ENCODE measurements at regions of chr4 and their contacts with region 1.

Region 1: GRCh38 chr4:185183619-185184281 is 20.1 kb downstream of the CFAP97 start:
- DNase-seq: peak; percentile 82
- H3K4me3 ChIP-seq: no peak overlapping the region
- H3K27ac ChIP-seq: no peak overlapping the region
- H3K4me1 ChIP-seq: no peaks in the 10 kb centered on the region
- H3K27me3 ChIP-seq: no peaks in the 10 kb centered on the region
- CTCF ChIP-seq: peak; percentile 71 to 80
- POLR2A ChIP-seq: no peak

Region 2: GRCh38 chr4:185039508-185040273 is 144.1 kb before region 1 on chr4:
- CTCF ChIA-PET with region 1: interaction called, 81 read pairs
- POLR2A ChIA-PET with region 1: no interaction called
- dilution Hi-C with region 1: no loop called
- intact Hi-C with region 1: loop called (anchors 1 kb)
- DNase-seq: peak; percentile 68
- H3K4me3 ChIP-seq: no peak overlapping the region
- H3K27ac ChIP-seq: no peak overlapping the region
- H3K4me1 ChIP-seq: no peaks in the 10 kb centered on the region
- H3K27me3 ChIP-seq: peaks cover 0 to 3% of the 10 kb centered on the region in 2 experiments
- CTCF ChIP-seq: peak; percentile 73 to 76
- POLR2A ChIP-seq: no peak

Region 3: DNA sequence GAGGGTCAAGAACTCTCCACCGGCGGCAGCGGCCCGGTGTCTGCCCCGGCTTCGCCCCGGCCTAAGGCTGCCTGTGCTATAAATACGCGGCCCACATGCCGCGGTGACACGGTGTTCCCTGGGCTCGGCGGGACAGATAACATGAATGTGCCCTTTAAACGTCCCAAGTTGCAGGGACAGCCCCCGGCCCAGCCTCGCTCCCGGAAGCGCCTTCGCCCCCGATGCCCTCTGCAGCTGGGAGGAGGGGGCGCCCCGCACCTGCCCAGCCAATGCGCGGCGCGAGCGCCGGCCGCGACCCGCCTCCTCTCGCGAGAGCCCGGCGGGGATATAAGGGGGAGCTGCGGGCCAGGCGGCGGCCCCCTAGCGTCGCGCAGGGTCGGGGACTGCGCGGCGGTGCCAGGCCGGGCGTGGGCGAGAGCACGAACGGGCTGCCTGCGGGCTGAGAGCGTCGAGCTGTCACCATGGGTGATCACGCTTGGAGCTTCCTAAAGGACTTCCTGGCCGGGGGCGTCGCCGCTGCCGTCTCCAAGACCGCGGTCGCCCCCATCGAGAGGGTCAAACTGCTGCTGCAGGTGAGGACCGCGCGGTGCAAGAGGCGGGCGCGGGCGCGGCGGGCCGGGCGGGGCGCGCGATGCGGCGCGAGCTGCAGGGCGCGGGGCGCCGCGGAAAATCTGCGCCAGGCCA is 40.7 kb before region 1 on chr4 and contains the start of gene SLC25A4:
- CTCF ChIA-PET with region 1: interaction called, 16 read pairs
- POLR2A ChIA-PET with region 1: interaction called, 3 read pairs
- dilution Hi-C with region 1: no loop called
- intact Hi-C with region 1: no loop called
- DNase-seq: peak; percentile 77
- H3K4me3 ChIP-seq: peak within 1 kb of the TSS; percentile 52 to 75 (median 69)
- H3K27ac ChIP-seq: no peak within 1 kb of the TSS
- H3K4me1 ChIP-seq: peaks cover 12% of the 10 kb centered on the region
- H3K27me3 ChIP-seq: no peaks in the 10 kb centered on the region
- CTCF ChIP-seq: peak; percentile 43 to 62
- POLR2A ChIP-seq: peak; percentile 93
- total RNA-seq, gene SLC25A4: 13.7 and 13.9 TPM in 2 replicates

Region 4: DNA sequence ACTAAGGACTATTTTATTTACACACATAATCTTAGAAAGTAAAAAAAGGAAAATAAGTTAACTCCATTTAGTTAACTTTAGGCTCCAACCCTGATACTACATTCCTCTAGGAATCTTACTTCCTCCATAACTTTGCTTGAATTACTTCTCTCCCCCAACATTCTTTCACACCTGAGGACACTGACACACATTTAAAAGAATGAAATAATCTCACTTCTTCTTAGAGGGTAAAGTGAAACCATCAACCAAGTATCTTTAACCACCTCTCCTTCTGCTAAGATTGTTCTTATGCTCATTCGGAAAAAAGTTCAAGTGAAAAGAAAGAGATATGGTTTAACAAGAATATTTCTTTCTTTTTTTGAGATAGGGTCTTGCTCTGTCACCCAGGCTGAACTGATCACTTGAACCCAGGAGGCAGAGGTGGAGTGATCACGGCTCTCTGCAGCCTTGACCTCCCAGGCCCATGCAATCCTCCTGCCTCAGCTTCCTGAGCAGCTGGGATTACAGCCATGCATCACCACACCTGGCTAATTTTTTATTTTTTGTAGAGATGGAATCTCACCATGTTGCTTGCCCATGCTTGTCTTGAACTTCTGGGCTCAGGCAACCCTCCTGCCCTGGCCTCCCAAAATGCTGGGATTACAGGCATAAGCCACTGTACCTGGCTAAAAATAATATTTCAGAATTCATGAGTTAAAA is 12.2 kb before region 1 on chr4:
- CTCF ChIA-PET with region 1: interaction called, 33 read pairs
- POLR2A ChIA-PET with region 1: no interaction called
- dilution Hi-C with region 1: no loop called
- intact Hi-C with region 1: no loop called
- DNase-seq: no peak
- H3K4me3 ChIP-seq: no peak overlapping the region
- H3K27ac ChIP-seq: no peak overlapping the region
- H3K4me1 ChIP-seq: no peaks in the 10 kb centered on the region
- H3K27me3 ChIP-seq: no peaks in the 10 kb centered on the region
- CTCF ChIP-seq: no peak
- POLR2A ChIP-seq: no peak

Region 5: GRCh38 chr4:185238750-185239149 is 55.0 kb after region 1 on chr4:
- CTCF ChIA-PET with region 1: no interaction called
- POLR2A ChIA-PET with region 1: no interaction called
- dilution Hi-C with region 1: no loop called
- intact Hi-C with region 1: no loop called
- DNase-seq: peak; percentile 13
- H3K4me3 ChIP-seq: no peak overlapping the region
- H3K27ac ChIP-seq: no peak overlapping the region
- H3K4me1 ChIP-seq: peaks cover 3% of the 10 kb centered on the region
- H3K27me3 ChIP-seq: no peaks in the 10 kb centered on the region
- CTCF ChIP-seq: no peak
- POLR2A ChIP-seq: no peak

Region 6: DNA sequence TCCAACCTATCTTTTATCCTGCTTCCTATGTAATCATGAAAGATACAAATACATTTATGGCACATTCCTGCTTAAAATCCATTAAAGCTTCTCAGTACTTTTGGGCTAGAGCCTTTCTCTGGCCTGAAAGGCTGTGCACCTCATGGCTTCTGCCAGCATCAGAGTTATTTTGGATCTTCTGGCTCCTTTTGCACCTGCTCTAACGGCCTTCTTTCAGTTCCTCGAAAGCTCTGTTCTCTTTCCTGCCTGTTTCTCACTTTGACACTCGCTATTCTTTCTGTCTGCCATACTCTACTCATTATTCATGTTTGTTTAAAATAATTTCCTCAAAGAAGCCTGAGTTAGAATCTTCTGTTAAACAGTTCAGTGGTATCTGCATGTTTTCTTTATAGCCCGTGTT is 126.0 kb after region 1 on chr4:
- CTCF ChIA-PET with region 1: no interaction called
- POLR2A ChIA-PET with region 1: no interaction called
- dilution Hi-C with region 1: no loop called
- intact Hi-C with region 1: no loop called
- DNase-seq: no peak
- H3K4me3 ChIP-seq: no peak overlapping the region
- H3K27ac ChIP-seq: no peak overlapping the region
- H3K4me1 ChIP-seq: peaks cover 6% of the 10 kb centered on the region
- H3K27me3 ChIP-seq: no peaks in the 10 kb centered on the region
- CTCF ChIP-seq: no peak
- POLR2A ChIP-seq: no peak